AG04450 (cell line): ENCODE measurements at regions of chr3 and their contacts with region 1.

Region 1: GRCh38 chr3:190321789-190322603 is at the start of gene CLDN1:
- DNase-seq: peak; percentile 39
- H3K4me3 ChIP-seq: peak within 1 kb of the TSS; percentile 67
- H3K27ac ChIP-seq: no peak within 1 kb of the TSS
- H3K27me3 ChIP-seq: no peaks in the 10 kb centered on the region
- CTCF ChIP-seq: peak; percentile 85
- polyA plus RNA-seq, gene CLDN1: 9.6 and 9.8 TPM in 2 replicates

Region 2: DNA sequence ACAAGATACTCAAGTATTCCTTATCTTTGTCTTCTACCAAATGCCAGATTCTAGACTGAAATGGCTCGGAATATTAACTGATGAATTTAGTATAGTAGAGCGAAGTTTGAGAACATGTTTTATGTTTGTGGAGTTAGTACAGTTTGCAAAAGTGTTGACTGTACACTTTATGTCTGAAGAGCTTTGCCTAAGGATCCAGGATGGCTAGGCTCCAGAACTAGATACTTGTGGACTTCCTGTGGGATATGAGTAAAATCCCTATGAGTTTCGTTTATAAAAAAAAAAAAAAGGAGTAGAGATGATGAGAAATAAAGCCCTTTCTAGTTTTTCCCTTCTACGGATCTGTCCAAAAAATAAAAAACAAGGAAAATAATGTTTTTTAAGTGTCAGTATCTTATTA is 594.1 kb before region 1 on chr3:
- CTCF ChIA-PET with region 1: no interaction called
- POLR2A ChIA-PET with region 1: no interaction called
- DNase-seq: no peak
- H3K4me3 ChIP-seq: no peak overlapping the region
- H3K27ac ChIP-seq: no peak overlapping the region
- H3K27me3 ChIP-seq: no peaks in the 10 kb centered on the region
- CTCF ChIP-seq: no peak

Region 3: DNA sequence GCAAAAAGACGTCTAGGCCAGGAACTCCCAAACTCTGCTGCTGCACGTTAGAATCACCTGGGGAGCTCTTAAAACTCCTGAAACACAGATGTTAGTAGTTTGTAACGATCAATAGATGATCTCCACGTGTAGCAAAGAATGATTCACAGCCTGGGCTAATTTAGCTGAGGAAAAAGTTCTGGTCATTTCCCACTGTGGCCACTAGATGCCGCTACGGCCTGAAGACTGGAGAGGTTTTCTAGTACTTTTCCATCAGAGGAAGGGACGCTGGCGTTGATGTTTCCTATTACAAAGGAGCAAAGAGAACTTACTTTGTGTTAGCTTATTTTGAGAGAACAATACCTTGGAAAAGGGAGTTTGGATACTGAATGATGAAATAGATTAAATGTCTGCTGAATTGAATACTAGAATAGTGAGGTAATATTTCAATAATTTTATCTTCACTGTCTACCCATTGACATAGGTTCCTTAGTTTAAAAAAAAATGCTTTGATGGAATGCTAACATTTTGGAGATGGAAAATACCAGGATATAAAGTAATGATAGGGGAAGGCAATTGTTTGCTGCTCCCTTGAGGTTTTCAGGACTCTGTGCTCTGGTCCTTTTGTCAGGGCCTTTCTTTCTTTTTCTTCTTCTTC is 360.4 kb before region 1 on chr3:
- CTCF ChIA-PET with region 1: interaction called, 105 read pairs
- POLR2A ChIA-PET with region 1: no interaction called
- DNase-seq: peak; percentile 56
- H3K4me3 ChIP-seq: no peak overlapping the region
- H3K27ac ChIP-seq: no peak overlapping the region
- H3K27me3 ChIP-seq: no peaks in the 10 kb centered on the region
- CTCF ChIP-seq: peak; percentile 91

Region 4: DNA sequence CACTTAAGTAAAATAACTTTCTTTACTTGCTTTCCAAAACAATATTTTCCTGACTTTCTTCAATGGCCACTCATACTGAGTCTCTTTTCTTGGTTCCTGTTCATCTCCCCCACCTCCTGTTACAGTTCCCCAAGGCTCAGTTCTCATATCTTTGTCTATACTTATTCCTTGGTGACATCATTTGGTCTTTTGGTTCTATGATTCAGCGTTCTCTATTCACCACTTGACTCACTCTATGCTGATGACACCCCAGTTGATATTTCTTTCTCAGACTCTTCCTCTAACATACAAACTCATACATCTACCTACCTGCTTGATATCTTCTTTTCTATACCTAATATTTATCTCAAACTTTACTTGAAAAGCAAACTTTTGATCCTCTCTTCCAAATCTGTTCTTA is 116.3 kb before region 1 on chr3:
- CTCF ChIA-PET with region 1: interaction called, 24 read pairs
- POLR2A ChIA-PET with region 1: no interaction called
- DNase-seq: peak; percentile 27
- H3K4me3 ChIP-seq: no peak overlapping the region
- H3K27ac ChIP-seq: no peak overlapping the region
- H3K27me3 ChIP-seq: no peaks in the 10 kb centered on the region
- CTCF ChIP-seq: no peak

Region 5: DNA sequence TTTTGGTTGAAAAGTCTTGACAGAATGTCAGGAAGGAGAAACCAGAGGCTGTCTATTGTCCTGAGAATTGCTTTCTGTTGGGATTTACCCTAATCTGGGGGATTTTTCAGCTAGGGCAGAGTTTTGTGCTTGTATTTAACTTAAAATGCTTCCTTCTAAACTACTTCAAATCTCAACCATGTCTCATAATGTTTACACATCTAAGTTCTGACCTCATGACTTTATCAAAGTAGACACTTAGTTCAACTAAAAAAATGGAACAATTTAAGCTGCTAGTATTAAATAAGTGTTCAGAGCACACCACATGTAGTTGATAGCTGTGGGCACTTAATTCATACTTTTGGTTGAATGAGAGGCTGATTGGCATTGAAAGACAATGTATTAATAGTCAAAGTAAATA is 28.0 kb before region 1 on chr3:
- CTCF ChIA-PET with region 1: interaction called, 21 read pairs
- POLR2A ChIA-PET with region 1: no interaction called
- DNase-seq: no peak
- H3K4me3 ChIP-seq: no peak overlapping the region
- H3K27ac ChIP-seq: no peak overlapping the region
- H3K27me3 ChIP-seq: no peaks in the 10 kb centered on the region
- CTCF ChIP-seq: no peak

Region 6: GRCh38 chr3:190345027-190345821 is 23.2 kb after region 1 on chr3:
- CTCF ChIA-PET with region 1: interaction called, 38 read pairs
- POLR2A ChIA-PET with region 1: no interaction called
- DNase-seq: peak; percentile 85
- H3K4me3 ChIP-seq: peak overlapping the region; percentile 38
- H3K27ac ChIP-seq: peak overlapping the region; percentile 94
- H3K27me3 ChIP-seq: no peaks in the 10 kb centered on the region
- CTCF ChIP-seq: no peak

Region 7: GRCh38 chr3:190414297-190414696 is 92.3 kb after region 1 on chr3:
- CTCF ChIA-PET with region 1: interaction called, 12 read pairs
- POLR2A ChIA-PET with region 1: no interaction called
- DNase-seq: no peak
- H3K4me3 ChIP-seq: no peak overlapping the region
- H3K27ac ChIP-seq: no peak overlapping the region
- H3K27me3 ChIP-seq: no peaks in the 10 kb centered on the region
- CTCF ChIP-seq: no peak